Transverse colon (tissue), 4 donors: ENCODE measurements at regions of chr11 and their contacts with region 1.

Region 1: DNA sequence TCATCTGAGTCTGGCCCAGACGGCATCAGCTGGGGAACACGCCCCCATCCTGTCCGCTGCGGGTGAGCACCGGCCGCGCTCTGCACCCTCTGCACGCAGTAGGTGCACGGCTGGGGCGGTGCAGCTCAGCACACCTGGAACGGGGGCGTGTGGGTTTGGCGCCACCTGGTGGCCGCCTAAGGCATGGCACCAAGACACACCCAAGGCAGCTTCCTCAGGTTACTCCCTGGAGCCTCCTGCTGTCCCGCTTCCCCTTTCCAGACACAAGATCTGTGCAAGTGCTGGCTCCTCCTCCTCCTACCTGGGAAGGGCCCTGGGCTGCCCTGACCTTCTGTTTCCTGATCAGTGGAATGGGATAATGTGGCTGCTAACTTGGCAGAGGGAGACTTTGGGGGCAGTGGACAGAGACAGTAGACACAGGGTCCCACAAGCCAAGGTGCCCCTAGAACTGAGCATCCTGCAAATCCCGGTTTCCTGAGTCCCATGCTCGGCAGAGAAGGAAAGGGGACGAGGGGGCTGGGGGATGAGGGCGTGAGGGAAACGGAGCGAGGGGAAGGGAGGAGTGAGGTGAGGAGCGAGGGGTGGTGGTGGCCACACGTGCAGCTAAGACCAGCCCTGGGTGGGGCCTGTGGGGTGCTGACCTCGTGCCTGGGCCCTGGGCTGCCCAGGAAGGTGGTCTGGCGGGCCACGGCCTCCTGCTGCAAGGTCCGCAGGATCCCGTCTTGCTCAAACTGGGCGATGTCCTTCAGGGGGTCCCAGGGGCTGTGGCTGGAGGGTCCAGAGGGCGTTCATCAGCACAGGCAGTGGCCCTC is 34.8 kb upstream of the CARS1 start:
- DNase-seq: peak; percentile 80
- H3K4me3 ChIP-seq: no peak overlapping the region
- H3K27ac ChIP-seq: no peak overlapping the region
- H3K4me1 ChIP-seq: peaks cover 0 to 3% (median 0%) of the 10 kb centered on the region in 4 donors
- H3K27me3 ChIP-seq: no peaks in the 10 kb centered on the region
- CTCF ChIP-seq: peak; percentile 98 to 100 (median 99)
- EP300 ChIP-seq: no peak
- POLR2A ChIP-seq: no peak

Region 2: GRCh38 chr11:2532704-2533586 is 559.1 kb before region 1 on chr11:
- in situ Hi-C with region 1: loop called in 1 of 4 experiments (anchors 25 kb)
- intact Hi-C with region 1: no loop called
- DNase-seq: peak; percentile 93
- H3K4me3 ChIP-seq: peak overlapping the region in 2 of 4 donors; percentile 9 to 12
- H3K27ac ChIP-seq: peak overlapping the region in 2 of 4 donors; percentile 8 to 37
- H3K4me1 ChIP-seq: peaks cover 5 to 22% (median 7%) of the 10 kb centered on the region in 4 donors
- H3K27me3 ChIP-seq: no peaks in the 10 kb centered on the region
- CTCF ChIP-seq: peak; percentile 99
- EP300 ChIP-seq: no peak
- POLR2A ChIP-seq: no peak

Region 3: GRCh38 chr11:3030289-3031070 is 61.5 kb before region 1 on chr11:
- in situ Hi-C with region 1: loop called in 2 of 4 experiments (anchors 5 to 10 kb)
- intact Hi-C with region 1: no loop called
- DNase-seq: no peak
- H3K4me3 ChIP-seq: no peak overlapping the region
- H3K27ac ChIP-seq: no peak overlapping the region
- H3K4me1 ChIP-seq: peaks cover 0 to 21% (median 0%) of the 10 kb centered on the region in 4 donors
- H3K27me3 ChIP-seq: no peaks in the 10 kb centered on the region
- CTCF ChIP-seq: no peak
- EP300 ChIP-seq: no peak
- POLR2A ChIP-seq: no peak

Region 4: GRCh38 chr11:3037040-3037944 is 54.7 kb before region 1 on chr11:
- in situ Hi-C with region 1: loop called in 3 of 4 experiments (anchors 5 to 10 kb)
- intact Hi-C with region 1: loop called (anchors 2 kb)
- DNase-seq: peak; percentile 82
- H3K4me3 ChIP-seq: no peak overlapping the region
- H3K27ac ChIP-seq: peak overlapping the region in 1 of 4 donors; percentile 8
- H3K4me1 ChIP-seq: peaks cover 0 to 14% (median 3%) of the 10 kb centered on the region in 4 donors
- H3K27me3 ChIP-seq: no peaks in the 10 kb centered on the region
- CTCF ChIP-seq: peak; percentile 77 to 86 (median 78)
- EP300 ChIP-seq: no peak
- POLR2A ChIP-seq: no peak

Region 5: GRCh38 chr11:3043315-3043871 is 48.6 kb before region 1 on chr11:
- in situ Hi-C with region 1: loop called in 2 of 4 experiments (anchors 5 to 10 kb)
- intact Hi-C with region 1: no loop called
- DNase-seq: peak; percentile 31
- H3K4me3 ChIP-seq: no peak overlapping the region
- H3K27ac ChIP-seq: peak overlapping the region; percentile 15 to 71 (median 43)
- H3K4me1 ChIP-seq: peaks cover 0 to 17% (median 12%) of the 10 kb centered on the region in 4 donors
- H3K27me3 ChIP-seq: no peaks in the 10 kb centered on the region
- CTCF ChIP-seq: no peak
- EP300 ChIP-seq: no peak
- POLR2A ChIP-seq: no peak

Region 6: GRCh38 chr11:3164979-3165814 is 73.2 kb after region 1 on chr11 and contains the start of gene OSBPL5:
- in situ Hi-C with region 1: no loop called
- intact Hi-C with region 1: no loop called
- DNase-seq: peak; percentile 82
- H3K4me3 ChIP-seq: peak within 1 kb of the TSS; percentile 56 to 95 (median 76)
- H3K27ac ChIP-seq: peak within 1 kb of the TSS; percentile 82 to 87 (median 85)
- H3K4me1 ChIP-seq: peaks cover 31 to 69% (median 50%) of the 10 kb centered on the region in 4 donors
- H3K27me3 ChIP-seq: peaks cover 12% of the 10 kb centered on the region
- CTCF ChIP-seq: no peak
- EP300 ChIP-seq: no peak
- POLR2A ChIP-seq: no peak
- total RNA-seq, gene OSBPL5: 37.3 to 211 (median 105) TPM